Naive thymus-derived CD8-positive, alpha-beta T cell (primary cell): ENCODE measurements at regions of chr2 and their contacts with region 1.

Region 1: DNA sequence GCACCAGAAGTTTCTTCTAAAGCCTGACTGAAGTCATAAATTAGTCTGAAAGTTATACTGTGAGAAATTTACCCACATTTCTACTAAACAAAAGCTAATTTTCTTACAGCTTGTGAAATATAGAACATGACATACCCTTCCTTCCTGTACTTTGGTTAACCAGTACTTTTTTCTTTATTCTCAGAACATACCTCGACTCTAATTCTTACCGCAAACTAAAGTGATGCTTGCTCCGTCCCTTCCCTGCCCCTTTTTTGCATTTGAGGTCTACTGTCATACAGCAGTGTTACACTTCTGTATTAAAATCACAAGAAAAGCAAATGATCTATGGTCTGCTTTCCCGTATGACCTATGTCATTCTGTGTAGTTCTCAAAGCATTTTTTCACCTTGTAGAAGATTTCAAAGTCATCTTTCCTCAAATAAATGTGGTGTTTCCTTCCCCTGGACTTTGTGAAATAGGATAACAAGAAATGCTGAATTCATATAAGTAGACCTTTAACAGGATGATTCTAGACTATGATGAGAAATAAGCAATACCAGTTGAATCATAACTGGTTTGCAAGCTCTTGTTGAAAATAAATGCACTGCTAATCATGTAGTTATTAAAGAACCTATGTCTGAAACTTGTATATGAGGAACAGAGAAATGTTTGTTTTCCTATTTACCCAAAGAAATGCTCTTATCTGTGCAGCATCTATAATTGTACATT is 30.4 kb downstream of the CYTIP start:
- DNase-seq: peak in 9 of 10 donors; percentile 48 to 91 (median 79)
- ATAC-seq: peak; percentile 80 to 89
- H3K4me3 Mint-ChIP-seq: peak overlapping the region; percentile 37 to 84 (median 74)
- H3K27ac Mint-ChIP-seq: peak overlapping the region; percentile 62 to 98 (median 96)
- H3K4me1 Mint-ChIP-seq: peaks cover 33 to 94% (median 88%) of the 10 kb centered on the region in 4 donors
- H3K27me3 Mint-ChIP-seq: no peaks in the 10 kb centered on the region

Region 2: DNA sequence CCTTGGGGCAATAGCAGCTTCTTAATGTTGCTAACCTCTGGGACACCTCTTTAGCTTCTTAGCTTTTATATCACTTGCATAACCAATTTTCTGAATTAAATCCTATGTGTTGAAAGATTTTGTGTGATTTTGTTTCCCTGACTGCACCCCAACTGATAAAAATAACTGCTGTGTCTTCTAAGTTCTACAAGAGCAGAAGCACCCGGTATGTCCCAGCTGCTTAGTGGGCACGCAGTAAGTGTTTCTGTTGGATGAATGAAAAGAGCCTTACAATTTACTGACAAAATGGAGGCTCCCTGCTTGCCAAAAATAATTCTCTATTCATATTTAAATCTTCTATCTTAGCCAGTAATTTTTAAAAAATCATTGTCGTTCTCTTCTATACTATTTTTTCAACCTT is 209.1 kb before region 1 on chr2:
- POLR2A ChIA-PET with region 1: no interaction called
- DNase-seq: no peak
- ATAC-seq: no peak
- H3K4me3 Mint-ChIP-seq: no peak overlapping the region
- H3K27ac Mint-ChIP-seq: no peak overlapping the region
- H3K4me1 Mint-ChIP-seq: peaks cover 0 to 2% (median 0%) of the 10 kb centered on the region in 4 donors
- H3K27me3 Mint-ChIP-seq: peaks cover 0 to 3% (median 0%) of the 10 kb centered on the region in 5 donors

Region 3: DNA sequence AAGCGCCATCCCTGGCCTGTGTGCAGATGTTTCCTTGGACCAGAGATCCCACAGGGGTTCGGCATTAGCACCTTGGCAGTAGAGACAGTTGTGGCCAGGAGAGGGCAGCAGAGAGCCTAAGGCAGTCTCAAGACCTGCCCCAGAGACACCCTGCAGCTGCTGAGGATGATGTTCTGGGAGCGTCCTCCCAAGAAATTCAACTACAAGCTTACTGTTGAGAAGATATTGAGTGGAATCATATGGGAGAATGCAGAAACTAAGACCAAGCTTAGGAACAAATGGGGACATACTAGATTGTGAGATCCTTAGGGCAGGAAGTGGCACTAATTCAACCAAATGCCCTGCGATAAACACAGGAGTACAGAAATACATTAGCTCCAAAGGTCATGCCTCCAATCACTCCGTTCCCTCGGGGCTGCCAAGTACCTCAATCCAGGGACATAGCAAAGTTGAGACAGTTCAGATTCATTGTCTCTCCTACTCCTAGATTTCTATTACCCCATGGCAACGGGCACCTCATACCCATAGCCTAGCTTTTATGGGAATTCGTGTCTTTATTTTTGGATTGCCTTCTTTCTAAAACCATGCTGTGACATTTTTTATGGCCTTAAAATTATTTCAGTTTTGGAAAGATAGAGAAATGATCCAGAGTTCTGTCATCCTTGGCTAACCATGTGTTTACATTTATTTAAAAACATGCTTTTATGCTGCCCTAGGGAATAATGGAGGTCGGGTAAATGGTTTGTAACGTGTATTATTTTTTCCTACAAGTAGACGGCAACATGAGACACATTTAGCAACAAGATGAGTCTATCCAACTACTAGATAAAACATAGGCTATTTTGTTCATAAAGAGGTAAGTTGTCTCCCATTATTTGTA is 85.6 kb before region 1 on chr2:
- POLR2A ChIA-PET with region 1: interaction called, 131 read pairs
- DNase-seq: peak; percentile 74 to 92 (median 82)
- ATAC-seq: peak; percentile 88 to 90
- H3K4me3 Mint-ChIP-seq: peak overlapping the region; percentile 51 to 84 (median 70)
- H3K27ac Mint-ChIP-seq: peak overlapping the region; percentile 8 to 96 (median 93)
- H3K4me1 Mint-ChIP-seq: peaks cover 25 to 55% (median 53%) of the 10 kb centered on the region in 4 donors
- H3K27me3 Mint-ChIP-seq: no peaks in the 10 kb centered on the region

Region 4: DNA sequence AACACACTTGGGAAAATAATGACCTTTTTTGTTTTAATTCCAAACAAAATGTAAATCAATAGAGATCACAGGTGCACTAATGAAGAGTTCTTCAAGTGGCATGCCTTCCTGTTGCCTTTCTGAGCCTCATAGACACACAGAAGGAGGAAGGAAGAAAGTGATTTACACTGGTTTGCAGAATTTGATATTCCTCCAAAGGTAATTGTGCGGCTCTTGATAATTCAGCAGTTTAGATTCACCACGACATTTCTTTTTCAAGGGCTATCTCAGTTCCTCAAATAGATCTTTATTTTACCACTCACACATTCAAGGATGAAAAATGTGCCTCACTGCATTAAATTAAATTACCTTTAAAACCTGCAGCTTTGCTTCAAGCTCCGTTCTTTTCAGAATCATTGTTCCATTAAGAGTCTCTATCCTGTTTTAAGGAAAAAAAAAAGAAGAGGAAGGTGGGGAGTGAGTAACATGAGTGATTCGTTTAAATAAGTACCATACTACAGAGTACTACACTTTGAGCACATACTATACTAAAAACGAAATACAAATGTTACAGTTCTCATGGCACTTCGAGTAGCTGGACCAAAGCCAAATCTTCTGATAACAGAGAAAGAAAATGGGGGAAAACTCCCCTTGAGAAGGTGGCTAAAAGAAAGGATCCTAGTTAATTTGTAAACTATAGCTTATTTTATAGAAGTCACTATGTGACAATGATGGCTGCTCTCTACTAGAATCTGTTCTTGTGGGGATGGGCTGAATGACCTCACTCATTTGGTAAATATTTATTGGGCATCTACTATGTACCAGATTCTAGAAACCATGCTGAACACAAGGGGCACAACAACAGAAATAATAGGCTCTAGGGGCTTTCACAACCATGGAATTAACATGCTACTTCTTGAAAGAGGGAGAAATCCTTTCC is 13.8 kb after region 1 on chr2:
- POLR2A ChIA-PET with region 1: interaction called, 411 read pairs
- DNase-seq: no peak
- ATAC-seq: peak; percentile 24 to 44
- H3K4me3 Mint-ChIP-seq: peak overlapping the region; percentile 4 to 99 (median 84)
- H3K27ac Mint-ChIP-seq: peak overlapping the region; percentile 88 to 100 (median 92)
- H3K4me1 Mint-ChIP-seq: peaks cover 43 to 86% (median 77%) of the 10 kb centered on the region in 4 donors
- H3K27me3 Mint-ChIP-seq: no peaks in the 10 kb centered on the region

Region 5: GRCh38 chr2:157433394-157433793 is 19.9 kb after region 1 on chr2:
- POLR2A ChIA-PET with region 1: interaction called, 411 read pairs
- DNase-seq: no peak
- ATAC-seq: peak; percentile 21 to 40
- H3K4me3 Mint-ChIP-seq: peak overlapping the region; percentile 84 to 99 (median 94)
- H3K27ac Mint-ChIP-seq: peak overlapping the region; percentile 90 to 100 (median 93)
- H3K4me1 Mint-ChIP-seq: peaks cover 53 to 93% (median 82%) of the 10 kb centered on the region in 4 donors
- H3K27me3 Mint-ChIP-seq: no peaks in the 10 kb centered on the region